Caco-2 (cell line): ENCODE measurements at regions of chr19 and their contacts with region 1.

Region 1: DNA sequence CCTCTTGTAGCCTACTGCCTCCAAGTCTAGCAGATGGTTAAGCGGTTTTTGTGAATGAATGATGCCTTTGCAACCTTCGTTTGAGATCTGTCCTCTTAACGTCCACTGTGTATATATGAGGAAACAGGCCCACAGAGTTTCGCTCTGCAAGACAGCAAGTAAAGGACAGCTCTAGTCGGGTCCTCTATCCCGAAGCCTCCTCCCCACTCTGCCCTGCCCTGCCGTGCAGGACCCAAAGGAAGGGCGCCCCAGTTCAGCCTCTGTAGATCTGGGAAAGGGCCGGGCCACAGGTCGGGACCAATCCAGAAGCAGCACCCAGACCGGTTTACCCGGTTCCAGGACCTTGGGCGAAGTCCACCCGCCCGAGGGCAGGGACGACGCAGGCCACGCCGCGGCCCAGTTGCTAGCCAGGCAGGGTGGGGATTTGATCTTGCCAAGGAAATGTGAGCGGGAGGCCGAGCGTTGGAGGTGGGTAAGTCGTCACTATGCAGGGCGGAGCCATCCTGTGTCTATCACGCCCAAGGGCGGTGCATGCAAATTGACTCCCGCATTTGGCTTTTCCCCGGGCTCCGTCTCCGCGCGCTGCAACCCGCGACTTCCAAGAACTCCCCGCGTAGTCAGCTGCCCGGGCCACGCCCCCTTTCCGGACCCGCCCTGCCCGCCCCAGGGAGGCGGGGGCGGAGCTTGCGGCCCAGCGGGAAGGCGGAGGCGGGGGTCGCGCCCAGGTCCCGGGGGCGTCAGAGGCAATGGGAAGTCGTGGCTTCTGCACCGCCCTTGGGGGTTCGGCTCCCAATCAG is 12.5 kb downstream of the IER2 start:
- DNase-seq: peak; percentile 99
- H3K4me3 ChIP-seq: peak overlapping the region; percentile 48
- H3K4me3 Mint-ChIP-seq: peak overlapping the region; percentile 79
- H3K27ac Mint-ChIP-seq: peak overlapping the region; percentile 93
- H3K4me1 ChIP-seq: peaks cover 37% of the 10 kb centered on the region
- H3K4me1 Mint-ChIP-seq: peaks cover 14% of the 10 kb centered on the region
- H3K27me3 ChIP-seq: no peaks in the 10 kb centered on the region
- H3K27me3 Mint-ChIP-seq: no peaks in the 10 kb centered on the region
- CTCF ChIP-seq: no peak

Region 2: GRCh38 chr19:12617646-12618045 is 545.1 kb before region 1 on chr19:
- CTCF ChIA-PET with region 1: no interaction called
- POLR2A ChIA-PET with region 1: no interaction called
- intact Hi-C with region 1: no loop called
- DNase-seq: no peak
- H3K4me3 ChIP-seq: no peak overlapping the region
- H3K4me3 Mint-ChIP-seq: no peak overlapping the region
- H3K27ac Mint-ChIP-seq: no peak overlapping the region
- H3K4me1 ChIP-seq: no peaks in the 10 kb centered on the region
- H3K4me1 Mint-ChIP-seq: no peaks in the 10 kb centered on the region
- H3K27me3 ChIP-seq: no peaks in the 10 kb centered on the region
- H3K27me3 Mint-ChIP-seq: no peaks in the 10 kb centered on the region
- CTCF ChIP-seq: no peak

Region 3: DNA sequence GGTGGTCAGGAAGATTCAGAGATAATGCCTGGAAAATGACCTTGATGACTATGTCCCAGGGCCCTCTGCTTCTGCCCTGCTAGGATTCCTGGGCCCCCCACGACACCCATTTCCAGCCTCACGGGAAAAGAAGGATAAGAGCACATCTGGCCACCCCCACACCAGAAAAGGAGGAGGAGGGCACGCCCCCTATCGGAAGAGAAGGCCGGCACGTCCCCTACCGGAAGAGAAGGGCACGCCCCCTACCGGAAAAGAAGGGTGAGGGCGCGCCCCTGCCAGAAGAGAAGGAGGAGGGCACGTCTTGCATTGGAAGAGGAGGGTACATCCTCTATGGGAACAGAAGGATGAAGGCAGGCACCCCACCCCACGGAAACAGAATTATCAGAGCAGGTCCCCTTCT is 71.8 kb after region 1 on chr19:
- CTCF ChIA-PET with region 1: no interaction called
- POLR2A ChIA-PET with region 1: no interaction called
- intact Hi-C with region 1: loop called (anchors 5 kb)
- DNase-seq: peak; percentile 64 to 70
- H3K4me3 ChIP-seq: no peak overlapping the region
- H3K4me3 Mint-ChIP-seq: no peak overlapping the region
- H3K27ac Mint-ChIP-seq: no peak overlapping the region
- H3K4me1 ChIP-seq: no peaks in the 10 kb centered on the region
- H3K4me1 Mint-ChIP-seq: peaks cover 5% of the 10 kb centered on the region
- H3K27me3 ChIP-seq: no peaks in the 10 kb centered on the region
- H3K27me3 Mint-ChIP-seq: peaks cover 17% of the 10 kb centered on the region
- CTCF ChIP-seq: peak; percentile 78 to 85